ENCODE measurements at regions of chr19 and their contacts with region 1.

Region 1: DNA sequence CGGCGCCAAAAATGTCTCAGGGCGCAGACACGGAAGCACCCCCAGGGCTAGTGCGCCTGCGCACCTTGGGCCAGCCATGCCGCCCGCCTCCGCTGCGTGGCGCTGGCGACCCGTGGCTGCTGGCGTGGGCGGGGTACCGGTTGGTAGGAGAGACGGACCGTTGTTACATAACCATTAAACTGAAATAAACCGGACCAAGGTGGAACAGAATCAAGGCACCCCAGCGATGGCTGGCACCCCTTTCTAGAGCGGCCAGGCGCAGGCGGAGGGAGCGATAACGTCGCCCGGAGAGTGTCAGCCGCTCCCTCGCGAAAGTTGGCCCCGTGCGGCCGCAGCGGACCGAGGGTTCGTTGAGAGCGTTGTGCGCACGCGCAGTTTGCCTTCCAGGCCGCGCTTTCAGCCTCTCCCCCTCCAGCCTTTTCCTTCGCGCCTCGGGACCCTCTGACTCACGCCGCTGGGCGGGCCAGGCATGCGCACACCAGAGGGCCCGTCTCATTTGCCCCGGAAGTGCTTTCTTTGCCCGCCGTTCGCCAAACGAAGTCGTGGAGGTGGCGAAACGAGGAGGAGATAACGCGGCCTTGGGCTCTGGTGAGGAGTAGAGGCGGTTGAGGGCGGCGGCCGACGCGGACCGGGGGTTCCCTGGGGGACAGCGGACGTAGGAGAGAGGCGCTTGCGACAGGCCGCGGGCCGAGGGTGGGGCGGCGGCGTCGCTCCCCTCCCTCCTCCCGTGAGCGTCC is at the starts of genes PLEKHJ1 and SF3A2:
- DNase-seq: peak; percentile 97
- H3K4me3 Mint-ChIP-seq: peak within 1 kb of the TSS; percentile 99
- H3K27ac Mint-ChIP-seq: peak within 1 kb of the TSS; percentile 99
- H3K4me1 Mint-ChIP-seq: peaks cover 43% of the 10 kb centered on the region
- H3K27me3 Mint-ChIP-seq: no peaks in the 10 kb centered on the region
- total RNA-seq, gene PLEKHJ1: 75.7 and 77.2 TPM in 2 replicates
- total RNA-seq, gene SF3A2: 153 and 154 TPM in 2 replicates

Region 2: DNA sequence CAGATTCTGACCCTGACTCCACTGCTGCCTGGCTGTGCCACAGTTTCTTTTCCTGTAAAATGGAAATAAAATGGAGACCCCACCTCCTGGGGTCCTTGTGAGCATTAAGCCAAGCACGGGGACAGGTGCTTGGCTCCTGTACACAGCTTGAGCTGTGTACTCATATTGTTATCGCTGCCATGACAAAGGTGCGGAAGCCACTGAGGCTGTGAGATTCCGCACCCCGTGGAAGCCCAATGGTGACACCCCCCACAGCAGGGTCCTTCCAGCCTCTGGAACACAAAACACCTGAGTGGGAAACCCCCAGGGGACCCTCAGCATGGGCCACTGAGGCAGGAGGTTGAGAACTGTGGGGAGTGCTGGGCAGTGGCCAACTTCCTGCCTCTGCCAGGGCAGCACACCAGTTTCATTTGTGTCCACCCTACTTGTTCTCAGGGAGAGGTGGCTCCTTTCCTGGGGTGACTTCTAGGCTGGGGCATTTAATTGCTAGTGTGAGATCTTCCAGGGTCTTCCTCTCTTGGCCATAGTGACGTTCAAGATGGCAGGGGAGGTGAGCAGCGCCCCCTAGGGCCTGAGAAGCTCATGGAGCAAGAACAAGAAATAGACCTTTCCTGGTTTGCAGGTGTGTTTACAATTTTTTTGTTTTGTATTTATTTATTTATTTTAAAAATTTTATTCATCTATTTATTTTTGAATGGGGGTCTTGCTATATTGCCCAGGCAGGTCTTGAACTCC is 25.1 kb after region 1 on chr19:
- intact Hi-C with region 1: no loop called
- DNase-seq: peak; percentile 46
- H3K4me3 Mint-ChIP-seq: no peak overlapping the region
- H3K27ac Mint-ChIP-seq: no peak overlapping the region
- H3K4me1 Mint-ChIP-seq: peaks cover 21% of the 10 kb centered on the region
- H3K27me3 Mint-ChIP-seq: no peaks in the 10 kb centered on the region

Region 3: GRCh38 chr19:2328401-2329148 is 92.1 kb after region 1 on chr19 and contains the starts of genes LSM7 and SPPL2B:
- intact Hi-C with region 1: loop called (anchors 5 kb)
- DNase-seq: peak; percentile 90
- H3K4me3 Mint-ChIP-seq: peak within 1 kb of the TSS; percentile 100
- H3K27ac Mint-ChIP-seq: peak within 1 kb of the TSS; percentile 100
- H3K4me1 Mint-ChIP-seq: peaks cover 44% of the 10 kb centered on the region
- H3K27me3 Mint-ChIP-seq: no peaks in the 10 kb centered on the region
- total RNA-seq, gene LSM7: 142 and 171 TPM in 2 replicates
- total RNA-seq, gene SPPL2B: 60.8 and 69.5 TPM in 2 replicates

Region 4: GRCh38 chr19:2391118-2391725 is 154.7 kb after region 1 on chr19:
- intact Hi-C with region 1: loop called (anchors 5 kb)
- DNase-seq: peak; percentile 20
- H3K4me3 Mint-ChIP-seq: no peak overlapping the region
- H3K27ac Mint-ChIP-seq: no peak overlapping the region
- H3K4me1 Mint-ChIP-seq: peaks cover 7% of the 10 kb centered on the region
- H3K27me3 Mint-ChIP-seq: peaks cover 4% of the 10 kb centered on the region

Measured in activated T-helper 2 cell treated with anti-CD3 and anti-CD28 coated beads, Interferon-gamma antibody, Interleukin-2, Interleukin-4, amounts not matched to agents 10 μg/mL and 5 μg/mL and 100 μg/mL, durations not matched to agents 14 hours and 24 hours and 36 hours (primary cell).